HEK293T (cell line): ENCODE measurements at regions of chr5 and their contacts with region 1.

Region 1: GRCh38 chr5:134225618-134226440 is at the start of gene PPP2CA:
- DNase-seq: peak; percentile 90

Region 2: GRCh38 chr5:133140311-133140710 is 1085.5 kb before region 1 on chr5:
- CTCF ChIA-PET with region 1: no interaction called
- POLR2A ChIA-PET with region 1: no interaction called
- DNase-seq: no peak

Region 3: DNA sequence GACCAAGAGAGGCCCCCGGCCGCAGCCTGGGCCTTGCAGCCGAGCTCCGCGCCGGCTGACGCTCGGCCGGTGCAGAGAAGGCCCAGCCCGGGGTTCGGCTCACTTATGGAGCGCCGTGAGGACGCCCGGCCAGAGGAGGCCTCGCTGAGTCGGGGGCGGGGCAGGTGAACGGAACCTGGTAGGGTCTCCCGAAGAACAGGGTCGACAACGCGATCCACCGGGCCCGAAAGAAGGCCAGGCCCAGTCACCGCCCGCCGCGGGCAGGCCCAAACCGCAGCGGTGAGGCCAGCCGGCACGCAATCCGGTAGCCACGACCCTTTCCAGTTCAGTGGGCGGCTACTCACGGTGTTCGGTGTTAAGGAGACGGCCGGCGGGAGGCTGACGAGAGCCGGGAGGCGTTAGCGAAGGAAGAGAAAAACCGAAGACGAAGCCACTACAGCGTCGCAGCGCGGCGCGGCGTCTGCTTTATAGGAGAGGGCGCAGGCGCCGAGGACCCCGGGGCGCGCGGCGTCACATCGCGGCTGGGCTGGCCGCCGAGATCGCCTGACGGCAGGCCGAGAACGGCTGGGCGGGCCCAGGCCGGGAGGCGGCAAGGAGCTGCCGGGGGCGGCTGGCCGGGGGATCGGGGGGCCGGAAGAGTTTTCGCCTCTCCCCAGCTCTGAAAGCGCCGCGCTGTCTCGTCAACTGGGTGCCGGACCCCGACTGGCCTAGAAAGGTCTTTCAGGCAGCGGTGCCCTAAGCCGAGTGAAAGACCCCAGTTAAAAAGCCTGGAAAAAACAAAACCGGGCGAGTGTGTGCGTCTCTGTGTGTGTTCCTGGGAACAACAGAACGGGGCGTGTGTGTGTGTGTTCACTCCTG is 49.1 kb before region 1 on chr5 and contains the start of gene SKP1:
- CTCF ChIA-PET with region 1: no interaction called
- POLR2A ChIA-PET with region 1: interaction called, 11 read pairs
- DNase-seq: peak; percentile 79

Region 4: GRCh38 chr5:134209477-134210240 is 16.2 kb before region 1 on chr5:
- CTCF ChIA-PET with region 1: interaction called, 4 read pairs
- POLR2A ChIA-PET with region 1: interaction called, 27 read pairs
- DNase-seq: no peak

Region 5: GRCh38 chr5:134215757-134216156 is 10.1 kb before region 1 on chr5:
- CTCF ChIA-PET with region 1: interaction called, 4 read pairs
- POLR2A ChIA-PET with region 1: interaction called, 27 read pairs
- DNase-seq: no peak

Region 6: DNA sequence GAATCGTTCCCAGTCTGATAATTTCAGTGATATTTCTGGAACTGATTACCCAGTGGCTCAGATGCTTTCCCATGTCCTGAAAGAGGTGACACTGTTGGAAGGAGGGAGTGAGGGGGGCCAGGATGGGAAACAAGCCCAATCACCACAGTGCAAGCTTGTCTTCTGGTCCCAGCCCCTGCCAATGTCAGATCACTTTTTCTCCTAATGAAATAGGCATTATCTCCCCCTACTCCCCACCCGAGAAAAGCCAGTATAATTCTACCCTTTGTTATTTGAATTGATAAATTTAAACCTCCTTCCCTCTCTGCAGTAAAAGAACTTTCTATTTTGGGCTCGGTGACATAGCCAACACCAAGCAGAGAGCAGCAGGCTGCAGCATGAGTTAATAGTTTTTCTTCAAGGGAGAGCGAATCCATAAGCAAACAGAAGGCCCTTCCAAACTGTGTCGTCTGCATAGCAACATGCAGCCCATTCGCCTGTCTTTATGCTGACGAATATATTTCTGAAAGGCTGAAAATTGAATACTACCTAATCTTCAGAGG is 14.7 kb after region 1 on chr5:
- CTCF ChIA-PET with region 1: interaction called, 4 read pairs
- POLR2A ChIA-PET with region 1: interaction called, 62 read pairs
- DNase-seq: peak; percentile 38

Region 7: DNA sequence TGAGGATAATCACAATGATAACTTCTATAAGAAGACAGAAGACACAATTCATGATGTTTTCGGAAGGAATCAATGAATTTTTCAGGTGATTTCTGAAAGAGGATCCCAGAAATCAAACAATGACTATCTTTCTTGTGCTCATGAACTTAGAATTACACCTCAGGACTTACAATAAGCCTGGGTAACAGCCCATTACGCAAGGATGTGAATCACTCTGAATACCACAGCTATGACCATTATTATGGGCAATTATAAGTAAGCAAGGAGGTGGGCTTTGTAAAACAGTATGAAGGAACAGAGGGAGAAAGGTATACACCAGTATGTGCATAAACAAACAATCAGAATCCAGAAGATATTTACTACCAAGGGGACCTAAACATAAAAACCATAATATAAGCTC is 21.6 kb after region 1 on chr5:
- CTCF ChIA-PET with region 1: interaction called, 4 read pairs
- POLR2A ChIA-PET with region 1: interaction called, 53 read pairs
- DNase-seq: no peak

Region 8: GRCh38 chr5:134275822-134276221 is 50.0 kb after region 1 on chr5:
- CTCF ChIA-PET with region 1: no interaction called
- POLR2A ChIA-PET with region 1: interaction called, 13 read pairs
- DNase-seq: no peak